GM12878 (cell line): ENCODE measurements at regions of chr12 and their contacts with region 1.

Region 1: DNA sequence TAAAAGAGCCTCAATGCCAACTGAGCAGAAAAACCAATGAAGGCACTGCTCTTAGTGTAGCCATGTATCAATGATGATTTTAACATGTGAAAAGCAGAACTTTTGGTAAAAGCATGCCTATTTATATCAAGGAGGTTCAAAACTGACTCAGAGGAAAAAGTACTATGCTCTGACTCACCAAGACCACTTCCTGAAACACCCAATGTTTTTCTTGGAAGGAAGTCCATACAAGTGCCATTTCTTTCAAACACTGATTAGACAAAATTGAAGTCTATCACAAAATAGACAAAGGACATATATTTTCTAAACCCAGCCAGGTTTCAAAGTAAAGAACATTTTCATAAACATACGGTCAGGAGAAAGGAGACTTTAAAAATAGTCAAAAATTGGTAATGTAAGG is 88.6 kb downstream of the EPS8 start:
- DNase-seq: peak; percentile 46
- ATAC-seq: peak; percentile 83
- H3K4me3 ChIP-seq: no peak overlapping the region
- H3K27ac ChIP-seq: no peak overlapping the region
- H3K4me1 ChIP-seq: no peaks in the 10 kb centered on the region
- H3K27me3 ChIP-seq: no peaks in the 10 kb centered on the region
- CTCF ChIP-seq: no peak
- EP300 ChIP-seq: peak; percentile 13 to 51; a peak in 1 of 4 replicates
- POLR2A ChIP-seq: no peak
- RAD21 ChIP-seq: no peak

Region 2: DNA sequence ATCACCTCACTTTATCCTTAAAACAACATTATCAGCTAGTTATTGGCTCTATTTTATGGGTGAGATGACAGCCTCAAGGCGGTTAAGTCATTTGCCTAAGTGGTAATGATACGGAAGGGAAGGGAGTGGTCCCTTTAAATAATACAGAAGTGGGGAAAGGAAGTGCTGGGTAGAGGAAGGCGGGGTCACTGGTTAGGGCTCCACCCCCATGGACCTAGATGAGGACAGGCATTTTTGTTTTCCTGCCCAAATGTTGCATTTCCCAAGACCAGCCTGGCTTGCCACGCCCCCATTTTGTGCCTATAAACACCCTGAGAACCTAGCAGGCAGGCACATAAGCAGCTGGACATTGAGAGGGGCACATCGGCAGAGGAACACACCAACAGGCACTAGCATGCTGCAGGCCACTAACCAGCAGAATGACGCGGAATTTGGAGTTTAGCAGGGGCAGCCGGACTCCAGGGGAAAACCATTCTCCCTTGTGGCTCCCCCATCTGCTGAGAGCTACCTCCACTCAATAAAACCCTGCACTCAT is 12.3 kb before region 1 on chr12:
- CTCF ChIA-PET with region 1: interaction called, 10 read pairs
- POLR2A ChIA-PET with region 1: interaction called, 7 read pairs
- RAD21 ChIA-PET with region 1: interaction called, 3 read pairs
- SMC1A ChIA-PET with region 1: interaction called, 30 read pairs
- in situ Hi-C with region 1: no loop called
- intact Hi-C with region 1: no loop called
- DNase-seq: no peak
- ATAC-seq: peak; percentile 85
- H3K4me3 ChIP-seq: no peak overlapping the region
- H3K27ac ChIP-seq: no peak overlapping the region
- H3K4me1 ChIP-seq: 0 out of 2 replicates have a peak, but pooled peaks cover 7% of the 10 kb centered on the region
- H3K27me3 ChIP-seq: no peaks in the 10 kb centered on the region
- CTCF ChIP-seq: no peak
- EP300 ChIP-seq: no peak
- POLR2A ChIP-seq: no peak
- RAD21 ChIP-seq: no peak

Region 3: GRCh38 chr12:15712823-15713660 is 12.4 kb after region 1 on chr12:
- CTCF ChIA-PET with region 1: interaction called, 4 read pairs
- POLR2A ChIA-PET with region 1: interaction called, 8 read pairs
- RAD21 ChIA-PET with region 1: interaction called, 16 read pairs
- SMC1A ChIA-PET with region 1: interaction called, 89 read pairs
- in situ Hi-C with region 1: no loop called
- intact Hi-C with region 1: no loop called
- DNase-seq: no peak
- ATAC-seq: peak; percentile 33
- H3K4me3 ChIP-seq: no peak overlapping the region
- H3K27ac ChIP-seq: no peak overlapping the region
- H3K4me1 ChIP-seq: no peaks in the 10 kb centered on the region
- H3K27me3 ChIP-seq: no peaks in the 10 kb centered on the region
- CTCF ChIP-seq: no peak
- EP300 ChIP-seq: no peak
- POLR2A ChIP-seq: no peak
- RAD21 ChIP-seq: no peak

Region 4: DNA sequence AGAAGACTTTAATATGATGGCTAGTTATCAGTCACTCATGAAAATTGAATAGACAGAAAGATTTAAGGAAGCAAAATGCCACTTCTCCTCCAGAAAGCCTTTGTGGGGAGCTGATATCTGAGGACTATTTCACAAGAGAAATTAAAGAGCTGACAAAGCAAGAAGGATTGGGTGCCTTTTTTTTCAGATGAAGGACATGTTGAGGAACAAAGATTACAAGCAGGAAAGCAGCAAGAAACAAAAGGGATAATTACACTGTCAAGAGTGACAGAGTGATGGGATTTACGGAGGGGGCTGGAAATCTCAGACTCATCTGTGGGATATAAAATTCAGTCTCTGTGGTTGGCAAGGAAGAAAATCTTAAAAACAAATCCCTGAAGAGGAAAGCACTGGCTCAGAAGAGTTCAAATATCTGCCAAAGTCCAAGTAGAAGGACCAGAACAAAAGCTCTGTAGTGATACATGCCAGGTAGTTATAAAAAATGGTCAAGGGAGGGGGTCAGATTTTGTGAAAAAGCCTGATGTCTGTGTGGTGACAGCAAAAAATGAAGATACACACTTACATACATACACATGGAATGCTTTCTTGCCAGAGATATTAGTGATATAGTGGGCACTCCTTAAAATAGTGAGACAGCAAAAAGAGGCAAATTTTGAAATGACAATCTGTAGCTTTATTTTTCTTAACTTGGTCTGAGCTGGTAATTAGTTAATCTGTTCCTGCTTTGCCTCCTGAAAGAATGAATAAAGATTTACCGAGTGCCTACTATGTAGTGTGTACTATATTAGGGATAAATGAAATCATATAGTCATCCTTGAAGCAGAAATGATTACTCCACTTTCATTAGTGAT is 25.7 kb after region 1 on chr12:
- CTCF ChIA-PET with region 1: interaction called, 5 read pairs
- POLR2A ChIA-PET with region 1: interaction called, 3 read pairs
- RAD21 ChIA-PET with region 1: interaction called, 6 read pairs
- SMC1A ChIA-PET with region 1: interaction called, 13 read pairs
- in situ Hi-C with region 1: no loop called
- intact Hi-C with region 1: no loop called
- DNase-seq: no peak
- ATAC-seq: peak; percentile 42
- H3K4me3 ChIP-seq: no peak overlapping the region
- H3K27ac ChIP-seq: no peak overlapping the region
- H3K4me1 ChIP-seq: no peaks in the 10 kb centered on the region
- H3K27me3 ChIP-seq: no peaks in the 10 kb centered on the region
- CTCF ChIP-seq: no peak
- EP300 ChIP-seq: no peak
- POLR2A ChIP-seq: no peak
- RAD21 ChIP-seq: no peak

Region 5: GRCh38 chr12:15741082-15741481 is 40.5 kb after region 1 on chr12:
- CTCF ChIA-PET with region 1: no interaction called
- POLR2A ChIA-PET with region 1: interaction called, 3 read pairs
- RAD21 ChIA-PET with region 1: no interaction called
- SMC1A ChIA-PET with region 1: interaction called, 10 read pairs
- in situ Hi-C with region 1: no loop called
- intact Hi-C with region 1: no loop called
- DNase-seq: no peak
- ATAC-seq: peak; percentile 44; the same call in 2 of the 3 replicates
- H3K4me3 ChIP-seq: no peak overlapping the region
- H3K27ac ChIP-seq: no peak overlapping the region
- H3K4me1 ChIP-seq: no peaks in the 10 kb centered on the region
- H3K27me3 ChIP-seq: no peaks in the 10 kb centered on the region
- CTCF ChIP-seq: no peak
- EP300 ChIP-seq: no peak
- POLR2A ChIP-seq: no peak
- RAD21 ChIP-seq: no peak